ENCODE measurements at regions of chr11 and their contacts with region 1.

Region 1: DNA sequence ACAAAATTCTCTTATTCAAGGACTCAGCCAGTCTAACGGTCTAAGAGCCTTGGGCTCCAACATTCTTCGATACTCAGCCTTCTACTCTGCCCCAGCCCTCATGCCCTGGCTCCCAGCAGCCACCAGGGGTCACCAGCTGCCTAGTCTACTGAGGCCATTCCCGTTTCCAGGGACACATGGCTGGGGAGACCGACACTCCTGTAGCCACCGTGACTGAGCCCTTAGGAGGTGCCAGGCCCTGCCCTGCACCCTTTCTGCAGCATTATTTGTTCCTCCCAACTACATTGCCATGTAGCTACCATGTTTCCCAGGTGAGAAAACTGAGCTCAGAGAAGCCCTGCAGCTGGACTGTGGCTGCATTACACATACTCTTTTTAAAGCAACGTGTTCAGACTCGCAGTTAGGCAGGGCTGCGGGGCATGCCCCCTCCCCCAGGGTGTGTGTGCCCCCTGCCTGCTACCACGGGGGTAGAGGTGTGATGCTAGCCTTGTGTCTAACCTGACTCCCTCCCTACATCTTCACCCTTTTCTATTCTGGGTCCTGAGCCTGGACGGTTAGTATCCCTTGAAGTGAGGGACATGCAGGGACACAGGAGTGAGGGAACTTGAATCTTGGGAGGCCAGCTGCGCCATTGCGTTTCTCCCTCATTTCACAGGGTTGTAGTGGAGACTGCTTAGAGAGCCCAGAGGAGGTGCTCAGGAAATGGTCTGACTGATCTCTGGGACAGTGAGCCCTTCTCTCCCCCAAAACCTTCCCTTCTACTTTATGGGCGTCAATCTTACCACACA is 17.5 kb downstream of the ATG16L2 start:
- DNase-seq: peak; percentile 87 to 90
- ATAC-seq: peak; percentile 74 to 86 (median 80)
- H3K4me3 ChIP-seq: no peak overlapping the region
- H3K27ac ChIP-seq: peak overlapping the region; percentile 86 to 95 (median 90)
- H3K4me1 ChIP-seq: peaks cover 35 to 83% (median 67%) of the 10 kb centered on the region in 9 donors
- H3K27me3 ChIP-seq: no peaks in the 10 kb centered on the region
- CTCF ChIP-seq: peak; percentile 90 to 98 (median 96)

Region 2: DNA sequence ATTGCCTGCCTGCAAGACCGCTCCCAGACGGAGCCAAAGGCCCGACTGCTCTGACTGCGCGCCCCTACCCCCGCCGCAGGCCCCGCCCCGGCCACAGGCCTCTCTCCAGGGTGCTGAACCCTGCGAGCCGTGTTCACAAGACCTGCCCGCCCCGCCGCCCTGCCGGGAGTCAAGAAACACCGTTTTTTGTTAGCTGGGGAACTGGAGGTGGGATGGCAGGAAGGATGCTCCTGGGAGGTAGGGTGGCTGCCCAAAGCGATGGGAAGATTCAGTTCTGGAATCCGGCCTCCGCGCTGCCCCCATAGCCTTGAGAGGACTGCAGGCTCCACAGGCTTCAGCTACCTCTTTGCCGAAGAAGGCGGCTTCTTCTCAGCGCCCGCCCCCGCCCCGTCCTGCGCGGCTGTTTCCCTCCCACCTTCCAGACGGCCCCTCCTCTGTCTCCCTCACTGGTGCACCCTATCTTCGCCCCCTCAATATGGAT is 154.8 kb before region 1 on chr11:
- intact Hi-C with region 1: no loop called
- DNase-seq: peak; percentile 61 to 66
- ATAC-seq: peak; percentile 40 to 77 (median 64)
- H3K4me3 ChIP-seq: no peak overlapping the region
- H3K27ac ChIP-seq: no peak overlapping the region
- H3K4me1 ChIP-seq: peaks cover 0 to 30% (median 4%) of the 10 kb centered on the region in 9 donors
- H3K27me3 ChIP-seq: peaks cover 5 to 77% (median 66%) of the 10 kb centered on the region in 7 donors
- CTCF ChIP-seq: no peak

Region 3: DNA sequence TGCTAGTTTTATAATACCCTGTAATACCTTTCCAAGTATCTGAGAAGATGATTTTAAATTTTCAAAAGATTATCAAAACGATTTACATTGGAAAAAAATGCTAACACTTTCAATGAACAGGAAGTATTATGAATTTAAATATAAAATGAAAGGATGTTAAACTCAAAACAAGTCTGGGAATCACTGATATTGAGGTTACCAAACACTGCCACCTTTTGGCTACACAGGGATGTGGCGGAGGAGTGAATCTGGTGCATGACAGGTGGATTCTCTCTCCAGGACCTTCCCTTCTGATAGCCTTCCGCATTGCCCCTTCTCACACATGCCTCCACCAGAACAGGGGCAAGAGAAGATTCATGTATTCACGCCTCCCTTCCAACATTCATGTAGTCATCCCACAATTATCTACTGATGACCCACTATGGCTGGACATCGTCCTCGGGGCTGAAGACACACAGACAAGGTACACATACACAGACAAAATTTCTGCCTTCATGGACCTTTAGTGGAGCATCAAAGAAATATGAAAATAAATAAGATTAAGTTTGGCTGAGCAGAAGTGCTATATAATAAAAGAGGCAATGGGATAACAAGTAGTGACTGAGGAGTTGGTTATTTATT is 17.2 kb after region 1 on chr11:
- intact Hi-C with region 1: loop called in 4 of 10 experiments (anchors 1 to 2 kb)
- DNase-seq: peak in 1 of 2 donors; percentile 50
- ATAC-seq: peak in 7 of 8 donors; percentile 40 to 67 (median 52)
- H3K4me3 ChIP-seq: no peak overlapping the region
- H3K27ac ChIP-seq: peak overlapping the region in 4 of 10 donors; percentile 8 to 58 (median 37)
- H3K4me1 ChIP-seq: peaks cover 1 to 19% (median 10%) of the 10 kb centered on the region in 9 donors
- H3K27me3 ChIP-seq: no peaks in the 10 kb centered on the region
- CTCF ChIP-seq: peak; percentile 44 to 83 (median 72)

Region 4: GRCh38 chr11:73141848-73142286 is 310.2 kb after region 1 on chr11:
- intact Hi-C with region 1: loop called in 5 of 10 experiments (anchors 1 to 10 kb)
- DNase-seq: peak; percentile 80 to 86
- ATAC-seq: peak; percentile 31 to 59 (median 49)
- H3K4me3 ChIP-seq: peak overlapping the region; percentile 91 to 98 (median 94)
- H3K27ac ChIP-seq: peak overlapping the region; percentile 96 to 99 (median 98)
- H3K4me1 ChIP-seq: peaks cover 0 to 77% (median 52%) of the 10 kb centered on the region in 9 donors
- H3K27me3 ChIP-seq: no peaks in the 10 kb centered on the region
- CTCF ChIP-seq: no peak

Region 5: GRCh38 chr11:73184953-73185671 is 353.4 kb after region 1 on chr11:
- intact Hi-C with region 1: loop called in 1 of 10 experiments (anchors 5 kb)
- DNase-seq: peak; percentile 71 to 75
- ATAC-seq: peak in 7 of 8 donors; percentile 33 to 77 (median 57)
- H3K4me3 ChIP-seq: peak overlapping the region in 1 of 10 donors; percentile 24
- H3K27ac ChIP-seq: peak overlapping the region in 3 of 10 donors; percentile 0 to 36 (median 6)
- H3K4me1 ChIP-seq: peaks cover 10 to 53% (median 32%) of the 10 kb centered on the region in 9 donors
- H3K27me3 ChIP-seq: no peaks in the 10 kb centered on the region
- CTCF ChIP-seq: peak; percentile 71 to 90 (median 85)

Region 6: DNA sequence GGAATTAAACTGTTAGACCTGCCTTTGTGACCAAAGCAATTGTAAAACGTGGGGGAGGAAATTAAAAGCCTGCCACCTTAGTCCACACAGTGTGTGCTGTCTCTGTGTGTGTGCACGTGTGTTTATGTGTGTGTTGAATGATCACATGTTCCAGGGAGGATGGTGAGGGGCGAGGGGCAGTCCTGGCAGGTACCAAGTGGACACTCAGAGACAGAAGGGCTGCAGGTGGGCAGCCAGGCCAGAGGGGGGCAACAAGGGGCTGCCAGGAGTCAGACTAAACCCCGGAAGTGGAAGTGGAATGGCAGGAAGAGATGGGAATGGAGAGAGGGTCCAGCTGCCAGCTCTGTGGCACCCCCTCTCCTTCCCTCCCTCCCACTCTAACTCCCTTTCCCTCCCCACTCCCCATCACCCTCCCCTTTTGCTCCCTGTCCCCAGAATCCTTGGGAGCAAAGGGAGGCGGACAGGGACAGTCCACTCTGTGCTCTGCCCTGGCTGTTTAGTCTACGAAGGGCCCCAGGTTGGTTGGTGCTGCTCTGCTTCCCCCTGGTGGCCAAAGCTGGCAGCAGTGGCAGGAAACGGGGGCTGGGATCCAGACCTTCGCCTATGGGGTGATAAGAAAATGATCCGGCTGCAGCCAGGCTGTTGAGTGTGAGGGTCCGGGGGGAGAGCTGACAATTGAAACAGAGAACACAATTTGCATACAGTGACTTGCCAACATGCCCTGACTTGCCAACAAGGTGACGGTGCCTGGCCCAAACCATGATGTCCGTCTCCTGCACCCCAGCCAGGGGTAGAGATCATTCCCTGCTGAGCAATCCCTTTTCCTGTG is 410.8 kb after region 1 on chr11:
- intact Hi-C with region 1: loop called in 8 of 10 experiments (anchors 1 to 10 kb)
- DNase-seq: peak; percentile 61 to 82
- ATAC-seq: peak; percentile 28 to 68 (median 56)
- H3K4me3 ChIP-seq: peak overlapping the region in 5 of 10 donors; percentile 16 to 45 (median 29)
- H3K27ac ChIP-seq: peak overlapping the region in 5 of 10 donors; percentile 45 to 86 (median 76)
- H3K4me1 ChIP-seq: peaks cover 23 to 56% (median 54%) of the 10 kb centered on the region in 9 donors
- H3K27me3 ChIP-seq: no peaks in the 10 kb centered on the region
- CTCF ChIP-seq: peak; percentile 73 to 98 (median 89)

Region 7: DNA sequence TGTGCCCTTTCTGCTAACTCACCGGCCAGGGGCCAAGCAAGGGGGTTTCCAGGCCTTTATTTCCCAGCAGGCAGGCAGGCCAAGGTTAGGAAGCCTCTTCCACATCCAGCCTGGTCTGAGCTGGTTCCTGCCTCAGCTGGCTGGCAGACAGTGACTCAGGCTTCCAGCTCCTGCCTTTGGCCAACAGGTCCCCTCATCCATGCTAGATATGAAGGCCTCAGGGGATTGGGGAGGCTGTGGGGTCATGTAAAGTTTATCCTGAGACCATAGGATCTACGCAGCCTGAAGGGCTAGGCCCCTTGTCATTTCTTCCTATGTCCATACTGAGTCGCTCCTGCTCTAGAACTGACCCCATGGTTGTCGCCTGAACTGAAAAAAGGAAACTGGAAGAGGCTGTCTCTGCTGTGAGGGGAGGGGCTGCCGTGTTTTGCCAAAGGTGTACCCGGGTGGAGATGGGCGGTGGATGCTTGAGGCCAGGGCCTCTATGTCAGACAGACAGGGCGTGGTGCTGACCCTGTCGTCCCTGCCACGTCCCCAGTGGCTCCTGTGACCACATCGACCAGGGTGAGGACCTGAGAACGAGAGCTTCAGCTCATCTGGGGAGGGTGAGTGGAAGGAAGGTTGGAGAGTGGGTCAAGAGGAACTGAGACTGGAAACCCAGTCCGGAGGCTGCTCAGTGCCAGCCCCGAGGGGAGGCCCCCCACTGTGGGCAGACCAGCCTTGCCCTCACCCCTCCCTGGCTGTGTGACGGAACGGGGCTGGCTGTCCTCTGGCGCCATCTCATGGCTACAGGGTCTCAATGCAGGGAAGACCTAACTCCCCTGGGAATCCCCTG is 457.4 kb after region 1 on chr11:
- intact Hi-C with region 1: loop called in 3 of 10 experiments (anchors 2 to 5 kb)
- DNase-seq: peak; percentile 70 to 72
- ATAC-seq: peak; percentile 79 to 89 (median 82)
- H3K4me3 ChIP-seq: peak overlapping the region in 8 of 10 donors; percentile 16 to 47 (median 37)
- H3K27ac ChIP-seq: peak overlapping the region; percentile 5 to 91 (median 60)
- H3K4me1 ChIP-seq: peaks cover 12 to 59% (median 31%) of the 10 kb centered on the region in 9 donors
- H3K27me3 ChIP-seq: no peaks in the 10 kb centered on the region
- CTCF ChIP-seq: peak; percentile 92 to 99 (median 96)

Measured in heart right ventricle (tissue), 16 donors.